ENCODE measurements at regions of chr11 and their contacts with region 1.

Region 1: GRCh38 chr11:15208378-15209222 is 93.9 kb downstream of the INSC start:
- DNase-seq: peak; percentile 43 to 79
- ATAC-seq: peak; percentile 90

Region 2: DNA sequence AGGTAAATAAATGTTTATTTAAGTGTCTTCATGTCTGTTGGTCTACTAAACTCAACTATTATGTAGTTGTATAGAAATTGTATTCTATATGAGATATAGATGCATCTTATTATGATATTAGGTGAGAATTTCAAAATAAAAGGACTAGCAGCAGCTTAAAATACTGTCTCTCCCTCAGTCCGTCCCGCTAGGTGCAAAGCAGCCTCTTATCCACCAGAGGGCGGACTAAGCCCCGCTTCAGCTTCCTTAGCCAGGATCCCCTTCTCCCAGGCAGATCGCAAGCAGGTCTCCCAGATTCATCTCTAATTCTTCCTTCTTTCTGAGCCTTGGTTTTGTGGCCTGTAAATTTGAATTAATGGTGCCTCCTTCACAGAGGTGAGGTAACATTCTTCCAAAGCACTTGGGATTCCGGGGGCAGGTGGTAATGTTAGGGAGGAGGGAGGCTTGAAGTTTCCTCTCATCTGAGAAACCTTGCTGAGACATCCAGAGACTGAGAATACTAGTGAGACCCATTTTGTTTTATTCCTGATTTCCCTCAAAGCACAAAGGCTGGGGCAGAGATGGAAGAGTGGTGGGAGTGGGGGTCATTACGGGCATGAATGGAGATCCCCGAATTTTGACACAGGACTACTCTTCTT is 107.4 kb before region 1 on chr11:
- intact Hi-C with region 1: loop called (anchors 2 to 5 kb)
- DNase-seq: peak; percentile 40 to 69
- ATAC-seq: peak; percentile 83

Measured in left colon (tissue), 2 donors.